MCF 10A (cell line): ENCODE measurements at regions of chr6 and their contacts with region 1.

Region 1: GRCh38 chr6:83615025-83615999 is 93.6 kb downstream of the SNAP91 start:
- DNase-seq: peak; percentile 55
- H3K4me3 Mint-ChIP-seq: no peak overlapping the region
- H3K27ac Mint-ChIP-seq: no peak overlapping the region
- H3K4me1 Mint-ChIP-seq: no peaks in the 10 kb centered on the region
- H3K27me3 Mint-ChIP-seq: peaks cover 63% of the 10 kb centered on the region
- CTCF ChIP-seq: peak; percentile 55

Region 2: DNA sequence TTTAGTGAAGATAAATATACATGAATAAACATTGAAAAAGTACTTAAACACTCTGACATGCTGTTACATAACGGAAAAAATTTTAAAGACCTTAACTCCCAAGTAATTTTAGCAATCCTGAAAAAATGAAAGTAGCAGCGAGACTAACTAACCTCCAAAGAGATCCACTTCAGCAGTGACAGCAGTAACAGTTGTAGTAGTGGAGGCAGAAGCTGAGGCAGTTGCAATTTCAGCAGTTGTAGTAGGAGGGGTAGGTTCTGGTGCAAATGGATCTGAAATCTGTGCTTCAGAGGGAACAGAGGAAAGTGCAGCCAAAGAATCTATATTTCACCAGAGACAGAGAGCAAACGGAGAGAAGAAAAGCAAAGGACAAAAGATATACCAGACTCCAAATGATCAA is 14.2 kb before region 1 on chr6:
- CTCF ChIA-PET with region 1: interaction called, 17 read pairs
- POLR2A ChIA-PET with region 1: no interaction called
- intact Hi-C with region 1: no loop called
- DNase-seq: no peak
- H3K4me3 Mint-ChIP-seq: no peak overlapping the region
- H3K27ac Mint-ChIP-seq: no peak overlapping the region
- H3K4me1 Mint-ChIP-seq: no peaks in the 10 kb centered on the region
- H3K27me3 Mint-ChIP-seq: no peaks in the 10 kb centered on the region
- CTCF ChIP-seq: no peak

Region 3: DNA sequence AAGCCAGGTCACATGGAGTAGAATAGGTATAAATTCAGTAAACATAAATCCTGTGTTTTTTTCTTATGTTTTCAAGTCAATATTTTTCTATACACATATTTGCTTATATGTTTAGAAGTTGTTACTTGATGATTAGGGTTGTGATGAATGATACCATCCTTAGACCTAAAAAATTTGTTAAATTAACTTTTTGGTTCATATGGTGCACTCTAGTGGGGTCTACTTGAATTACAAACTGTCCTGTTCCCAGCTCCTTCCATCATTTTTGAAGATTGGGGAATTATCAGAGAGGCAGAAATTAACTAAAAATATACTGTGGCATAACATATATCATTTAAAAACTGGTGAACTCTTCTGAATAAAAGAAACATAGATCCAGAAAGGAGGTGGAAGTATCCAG is 189.6 kb after region 1 on chr6:
- CTCF ChIA-PET with region 1: interaction called, 6 read pairs
- POLR2A ChIA-PET with region 1: no interaction called
- intact Hi-C with region 1: loop called (anchors 1 kb)
- DNase-seq: no peak
- H3K4me3 Mint-ChIP-seq: no peak overlapping the region
- H3K27ac Mint-ChIP-seq: no peak overlapping the region
- H3K4me1 Mint-ChIP-seq: no peaks in the 10 kb centered on the region
- H3K27me3 Mint-ChIP-seq: no peaks in the 10 kb centered on the region
- CTCF ChIP-seq: no peak

Region 4: DNA sequence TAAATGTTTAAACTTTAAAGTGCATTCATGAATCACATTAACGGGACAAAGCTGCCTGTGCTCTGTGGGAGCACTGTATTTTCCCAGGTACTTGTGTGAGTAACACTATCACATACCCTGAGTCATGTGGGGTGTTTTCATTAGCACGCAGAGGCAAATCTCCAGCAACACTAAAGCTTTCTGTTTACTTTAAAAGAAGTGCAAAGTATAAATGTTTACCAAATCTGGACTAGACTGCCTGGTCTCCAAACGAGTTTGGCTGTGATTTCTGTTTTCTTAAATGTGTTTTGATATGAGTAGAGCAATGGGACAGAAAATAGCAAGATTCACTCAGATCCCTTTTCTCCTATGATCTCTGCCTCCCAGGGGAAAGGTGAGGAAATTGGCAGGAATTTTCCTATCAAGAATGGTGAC is 209.1 kb after region 1 on chr6:
- CTCF ChIA-PET with region 1: interaction called, 11 read pairs
- POLR2A ChIA-PET with region 1: no interaction called
- intact Hi-C with region 1: no loop called
- DNase-seq: peak; percentile 73
- H3K4me3 Mint-ChIP-seq: no peak overlapping the region
- H3K27ac Mint-ChIP-seq: peak overlapping the region; percentile 51
- H3K4me1 Mint-ChIP-seq: peaks cover 10% of the 10 kb centered on the region
- H3K27me3 Mint-ChIP-seq: no peaks in the 10 kb centered on the region
- CTCF ChIP-seq: no peak

Region 5: DNA sequence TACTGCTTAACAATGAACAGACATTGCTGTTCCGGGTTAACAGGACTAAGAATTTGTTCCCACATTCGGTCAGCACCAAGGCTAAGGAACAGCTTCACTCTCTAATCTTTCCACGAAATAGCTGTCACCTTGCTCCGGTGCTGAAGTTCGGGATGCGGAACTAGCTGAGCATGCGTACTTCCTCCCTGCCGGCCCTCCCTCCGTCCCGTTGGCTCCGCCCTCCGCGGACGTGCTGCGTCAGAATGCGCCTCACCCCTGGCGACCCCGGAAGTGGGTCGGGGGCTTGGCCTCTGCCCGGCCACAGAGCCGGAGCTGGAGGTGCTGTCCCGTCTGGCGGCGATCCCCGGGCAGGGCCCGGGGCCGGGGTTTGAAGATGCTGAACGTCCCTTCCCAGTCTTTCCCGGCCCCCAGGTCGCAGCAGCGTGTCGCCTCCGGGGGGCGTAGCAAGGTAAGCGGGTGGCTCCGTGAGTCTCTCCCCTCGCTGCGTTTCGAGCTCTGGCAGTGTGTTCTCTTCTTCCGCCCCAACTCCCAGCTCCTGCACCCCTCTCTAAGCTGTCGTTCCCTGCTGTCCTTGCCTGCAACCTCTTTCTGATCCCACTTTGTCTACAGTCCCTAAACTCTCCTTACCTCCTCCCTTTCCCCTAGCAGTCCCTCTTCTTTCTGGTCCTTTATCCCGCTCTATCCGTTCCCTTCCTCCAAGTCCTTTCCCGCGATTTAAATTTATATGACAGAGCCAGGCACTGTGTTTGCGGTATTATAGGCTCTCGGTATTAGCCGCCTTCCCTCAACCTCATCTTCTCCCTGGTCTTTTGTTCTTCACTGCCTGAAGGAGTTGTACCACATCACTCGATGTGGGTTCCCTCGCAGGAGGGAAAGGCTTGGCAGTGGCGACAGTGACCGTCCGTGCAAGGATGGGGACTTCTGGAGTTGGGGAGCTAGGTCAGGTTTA is 244.4 kb after region 1 on chr6 and contains the start of gene CYB5R4:
- CTCF ChIA-PET with region 1: interaction called, 12 read pairs
- POLR2A ChIA-PET with region 1: interaction called, 8 read pairs
- intact Hi-C with region 1: no loop called
- DNase-seq: peak; percentile 95
- H3K4me3 Mint-ChIP-seq: peak within 1 kb of the TSS; percentile 90
- H3K27ac Mint-ChIP-seq: peak within 1 kb of the TSS; percentile 81
- H3K4me1 Mint-ChIP-seq: peaks cover 11% of the 10 kb centered on the region
- H3K27me3 Mint-ChIP-seq: peaks cover 18% of the 10 kb centered on the region
- CTCF ChIP-seq: peak; percentile 31
- total RNA-seq, gene CYB5R4: 18.9 and 22.2 TPM in 2 replicates

Region 6: DNA sequence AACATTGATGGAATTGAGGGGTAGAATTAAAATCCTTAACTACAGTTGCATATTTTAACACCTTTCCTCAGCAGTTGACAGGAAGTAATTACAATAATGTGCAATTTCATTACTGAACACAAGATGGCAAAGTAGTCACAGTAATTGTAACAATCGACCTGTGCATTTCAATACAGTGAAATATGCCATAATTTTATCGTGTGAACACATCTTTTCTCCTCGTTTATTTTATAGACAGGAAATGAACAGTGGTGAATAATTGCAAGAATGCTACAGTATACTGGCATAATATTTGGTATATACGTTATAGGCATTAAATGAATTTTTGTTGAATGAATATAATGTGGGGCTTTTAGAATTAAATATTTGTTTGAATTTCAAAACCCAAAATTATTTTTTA is 269.2 kb after region 1 on chr6:
- CTCF ChIA-PET with region 1: interaction called, 4 read pairs
- POLR2A ChIA-PET with region 1: no interaction called
- intact Hi-C with region 1: loop called (anchors 10 kb)
- DNase-seq: peak; percentile 52
- H3K4me3 Mint-ChIP-seq: no peak overlapping the region
- H3K27ac Mint-ChIP-seq: peak overlapping the region; percentile 3
- H3K4me1 Mint-ChIP-seq: peaks cover 9% of the 10 kb centered on the region
- H3K27me3 Mint-ChIP-seq: no peaks in the 10 kb centered on the region
- CTCF ChIP-seq: peak; percentile 69

Region 7: DNA sequence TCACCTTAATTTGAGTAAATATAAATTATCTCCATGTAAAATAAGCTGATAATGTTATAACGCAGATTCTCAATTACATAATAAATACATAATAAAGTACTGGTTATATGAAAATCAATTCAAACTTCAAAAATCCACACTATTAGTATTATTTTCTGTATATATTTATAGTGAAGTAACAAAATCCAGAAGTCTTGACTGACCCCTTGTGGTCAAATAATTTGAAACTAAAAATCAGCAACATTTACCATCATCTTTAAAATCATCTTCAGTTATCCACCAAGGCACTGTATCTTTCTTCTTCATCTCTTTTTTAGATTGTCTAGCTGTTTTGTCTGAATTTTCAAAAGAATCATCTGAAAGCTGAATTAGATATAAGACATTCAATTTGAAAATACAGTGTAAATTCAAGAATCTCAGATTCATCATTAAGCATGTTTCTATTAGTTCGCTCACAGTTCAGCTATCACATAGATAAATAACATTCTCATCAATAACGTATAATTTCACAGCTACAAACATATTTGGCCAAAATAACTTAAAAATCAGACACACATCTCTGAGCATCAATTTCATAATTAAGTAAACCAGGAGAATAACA is 605.6 kb after region 1 on chr6:
- CTCF ChIA-PET with region 1: interaction called, 15 read pairs
- POLR2A ChIA-PET with region 1: no interaction called
- intact Hi-C with region 1: loop called (anchors 1 kb)
- DNase-seq: peak; percentile 38
- H3K4me3 Mint-ChIP-seq: no peak overlapping the region
- H3K27ac Mint-ChIP-seq: no peak overlapping the region
- H3K4me1 Mint-ChIP-seq: peaks cover 4% of the 10 kb centered on the region
- H3K27me3 Mint-ChIP-seq: no peaks in the 10 kb centered on the region
- CTCF ChIP-seq: peak; percentile 60